Psoas muscle (tissue), 8 donors: ENCODE measurements at regions of chr19 and their contacts with region 1.

Region 1: DNA sequence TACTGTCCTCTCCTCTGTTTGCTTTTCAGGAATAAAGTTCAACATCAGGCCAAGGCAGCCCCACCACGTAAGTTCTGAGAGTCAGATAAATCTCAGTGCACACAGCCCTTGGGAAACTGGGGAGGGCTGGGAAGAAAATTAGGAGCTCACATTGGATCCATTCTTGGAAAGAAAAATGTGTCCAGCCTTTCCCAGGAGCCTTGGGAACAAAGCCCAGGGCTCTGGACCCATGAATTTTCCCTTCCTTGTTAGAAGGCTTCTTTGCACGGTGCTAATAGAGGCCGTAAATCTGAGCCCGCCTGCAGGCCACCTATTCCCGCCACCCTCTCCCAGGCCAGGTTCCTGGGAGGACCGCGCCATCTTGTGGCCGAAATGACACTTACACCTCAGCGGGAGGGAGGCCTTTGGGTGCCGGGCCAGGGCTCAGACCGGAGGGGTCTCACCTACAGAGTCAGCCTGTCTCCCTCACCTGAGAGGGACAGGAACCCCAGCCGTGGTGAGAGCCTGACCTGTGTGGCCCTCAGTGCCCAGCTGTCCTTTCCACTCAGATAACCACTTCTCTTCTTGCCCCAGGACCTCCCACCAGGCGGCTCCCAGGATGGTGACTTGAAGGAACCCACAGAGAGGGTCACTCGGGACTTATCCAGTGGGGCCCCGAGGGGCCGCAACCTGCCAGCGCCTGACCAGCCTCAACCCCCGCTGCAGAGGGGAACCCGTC is 25.1 kb upstream of the KCTD15 start:
- DNase-seq: peak; percentile 65 to 82
- ATAC-seq: peak; percentile 74 to 85 (median 80)
- H3K4me3 ChIP-seq: no peak overlapping the region
- H3K27ac ChIP-seq: no peak overlapping the region
- H3K4me1 ChIP-seq: no peaks in the 10 kb centered on the region
- H3K27me3 ChIP-seq: peaks cover 0 to 36% (median 0%) of the 10 kb centered on the region in 3 donors
- CTCF ChIP-seq: peak; percentile 89

Region 2: GRCh38 chr19:33235269-33235995 is 536.1 kb before region 1 on chr19:
- intact Hi-C with region 1: loop called (anchors 5 to 10 kb)
- DNase-seq: peak; percentile 76 to 87
- ATAC-seq: peak; percentile 78 to 86 (median 79)
- H3K4me3 ChIP-seq: no peak overlapping the region
- H3K27ac ChIP-seq: no peak overlapping the region
- H3K4me1 ChIP-seq: no peaks in the 10 kb centered on the region
- H3K27me3 ChIP-seq: peaks cover 0 to 14% (median 0%) of the 10 kb centered on the region in 3 donors
- CTCF ChIP-seq: peak; percentile 93

Region 3: DNA sequence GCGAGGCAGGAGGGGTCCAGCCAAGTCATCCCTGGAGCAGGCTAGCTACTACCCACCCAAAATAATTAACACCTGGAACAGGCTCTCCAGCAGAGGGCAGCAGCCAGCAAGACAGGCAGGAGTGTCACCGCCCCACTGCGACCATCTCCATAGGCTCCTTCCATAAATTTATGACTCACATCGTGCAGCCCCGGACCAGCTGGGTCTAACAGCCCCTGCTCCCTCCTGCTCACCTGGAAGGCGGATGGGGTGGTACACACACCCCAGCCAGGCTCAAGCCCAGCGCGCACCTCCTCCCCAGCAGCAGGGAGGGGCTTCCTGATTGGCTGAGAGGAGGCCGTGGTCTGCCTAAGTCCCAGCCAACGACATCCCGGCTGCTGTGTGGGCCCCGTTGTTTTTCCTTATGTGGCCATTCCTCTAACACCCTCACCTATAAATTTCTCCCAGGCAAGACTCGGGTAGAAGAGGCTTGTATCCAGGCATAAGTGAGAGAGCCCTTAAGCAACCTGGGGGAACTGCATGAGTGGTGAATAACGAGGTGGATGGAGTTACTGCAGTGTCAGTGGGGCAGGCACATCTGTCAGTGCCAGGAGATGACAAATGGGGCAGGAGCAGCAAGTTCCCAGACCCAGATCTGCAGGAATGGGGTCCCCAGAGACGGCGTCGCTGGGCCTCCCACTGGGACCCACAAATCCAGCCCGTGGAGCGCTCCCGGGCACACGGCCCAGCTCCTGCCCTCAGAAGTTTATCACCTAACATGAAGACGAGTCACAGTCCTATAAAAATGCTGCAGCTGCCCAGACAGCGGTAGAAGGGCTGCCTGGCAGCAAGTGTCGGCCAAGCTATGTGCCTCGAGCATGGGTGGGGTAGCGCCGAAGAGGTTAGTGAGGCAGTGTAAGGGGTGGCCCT is 355.0 kb before region 1 on chr19:
- intact Hi-C with region 1: loop called in 1 of 2 experiments (anchors 5 kb)
- DNase-seq: peak in 1 of 2 donors; percentile 54
- ATAC-seq: peak; percentile 66 to 81 (median 75)
- H3K4me3 ChIP-seq: no peak overlapping the region
- H3K27ac ChIP-seq: no peak overlapping the region
- H3K4me1 ChIP-seq: no peaks in the 10 kb centered on the region
- H3K27me3 ChIP-seq: no peaks in the 10 kb centered on the region
- CTCF ChIP-seq: peak; percentile 61

Region 4: GRCh38 chr19:33430674-33431277 is 340.8 kb before region 1 on chr19:
- intact Hi-C with region 1: loop called (anchors 1 to 5 kb)
- DNase-seq: peak; percentile 65 to 84
- ATAC-seq: peak; percentile 78 to 91 (median 83)
- H3K4me3 ChIP-seq: no peak overlapping the region
- H3K27ac ChIP-seq: no peak overlapping the region
- H3K4me1 ChIP-seq: no peaks in the 10 kb centered on the region
- H3K27me3 ChIP-seq: peaks cover 0 to 2% (median 0%) of the 10 kb centered on the region in 3 donors
- CTCF ChIP-seq: peak; percentile 76